Activated CD4-positive, alpha-beta T cell treated with anti-CD3 and anti-CD28 coated beads for 36 hours (primary cell): ENCODE measurements at regions of chr17 and their contacts with region 1.

Region 1: GRCh38 chr17:57084802-57085447 is at the start of gene AKAP1:
- DNase-seq: peak; percentile 97
- ATAC-seq: peak; percentile 96
- H3K4me3 Mint-ChIP-seq: peak within 1 kb of the TSS; percentile 81
- H3K27ac Mint-ChIP-seq: peak within 1 kb of the TSS; percentile 87
- H3K4me1 Mint-ChIP-seq: peaks cover 44% of the 10 kb centered on the region
- H3K27me3 Mint-ChIP-seq: no peaks in the 10 kb centered on the region
- total RNA-seq, gene AKAP1: 27.0 to 29.8 TPM

Region 2: GRCh38 chr17:56977673-56978395 is 107.1 kb before region 1 on chr17 and contains the start of gene SCPEP1:
- CTCF ChIA-PET with region 1: interaction called, 3 read pairs
- POLR2A ChIA-PET with region 1: no interaction called
- intact Hi-C with region 1: loop called (anchors 1 kb)
- DNase-seq: peak; percentile 90
- ATAC-seq: peak; percentile 96
- H3K4me3 Mint-ChIP-seq: peak within 1 kb of the TSS; percentile 83
- H3K27ac Mint-ChIP-seq: peak within 1 kb of the TSS; percentile 74
- H3K4me1 Mint-ChIP-seq: peaks cover 18% of the 10 kb centered on the region
- H3K27me3 Mint-ChIP-seq: peaks cover 3% of the 10 kb centered on the region
- total RNA-seq, gene SCPEP1: 9.7 to 14.8 TPM

Region 3: GRCh38 chr17:57104461-57105175 is 19.7 kb after region 1 on chr17:
- CTCF ChIA-PET with region 1: no interaction called
- POLR2A ChIA-PET with region 1: no interaction called
- intact Hi-C with region 1: no loop called
- DNase-seq: no peak
- ATAC-seq: no peak
- H3K4me3 Mint-ChIP-seq: no peak overlapping the region
- H3K27ac Mint-ChIP-seq: no peak overlapping the region
- H3K4me1 Mint-ChIP-seq: peaks cover 11% of the 10 kb centered on the region
- H3K27me3 Mint-ChIP-seq: no peaks in the 10 kb centered on the region